SK-N-SH (cell line): ENCODE measurements at regions of chr14 and their contacts with region 1.

Region 1: DNA sequence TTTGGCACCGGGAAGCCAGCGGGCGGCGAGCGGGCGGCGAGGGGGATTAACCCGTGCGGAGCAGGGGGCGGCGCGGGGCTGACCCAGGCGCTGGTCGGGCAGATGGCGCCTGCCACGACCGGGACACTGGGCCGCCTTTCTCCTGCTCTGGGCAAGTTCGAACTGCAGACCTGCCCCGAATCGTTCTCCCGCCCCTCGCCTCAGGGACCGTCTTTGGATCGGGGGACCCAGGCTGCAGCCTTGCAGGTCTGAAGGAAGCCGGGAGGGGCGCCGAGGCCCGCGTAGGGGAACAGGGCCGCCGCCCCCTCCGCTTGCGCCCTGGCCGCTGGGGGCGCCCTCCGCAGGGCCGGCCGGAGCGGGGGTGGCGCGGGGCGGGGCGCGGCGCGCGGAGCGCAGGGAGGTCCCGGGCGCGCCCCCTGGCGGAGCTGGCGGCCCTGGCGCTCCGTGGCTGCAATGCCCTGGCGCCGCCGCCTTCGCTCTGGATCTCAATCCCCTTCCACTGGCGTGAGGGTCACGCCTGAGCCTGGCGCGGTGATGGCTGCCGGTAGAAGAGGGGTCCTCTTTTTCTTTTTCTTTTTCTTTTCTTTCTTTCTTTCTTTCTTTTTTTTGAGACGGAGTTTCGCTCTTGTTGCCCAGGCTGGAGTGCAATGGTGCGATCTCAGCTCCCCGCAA is 449 bp upstream of the LTBP2 start:
- DNase-seq: peak; percentile 95
- H3K4me3 ChIP-seq: peak overlapping the region; percentile 68 to 73
- H3K27ac ChIP-seq: peak overlapping the region; percentile 75 to 99
- H3K4me1 ChIP-seq: peaks cover 17 to 37% of the 10 kb centered on the region in 2 experiments; a peak in 3 of 4 replicates
- H3K27me3 ChIP-seq: no peaks in the 10 kb centered on the region
- CTCF ChIP-seq: peak; percentile 63
- EP300 ChIP-seq: peak in 1 of 2 experiments; percentile 38; a peak in 1 of 4 replicates
- RAD21 ChIP-seq: peak; percentile 54

Region 2: DNA sequence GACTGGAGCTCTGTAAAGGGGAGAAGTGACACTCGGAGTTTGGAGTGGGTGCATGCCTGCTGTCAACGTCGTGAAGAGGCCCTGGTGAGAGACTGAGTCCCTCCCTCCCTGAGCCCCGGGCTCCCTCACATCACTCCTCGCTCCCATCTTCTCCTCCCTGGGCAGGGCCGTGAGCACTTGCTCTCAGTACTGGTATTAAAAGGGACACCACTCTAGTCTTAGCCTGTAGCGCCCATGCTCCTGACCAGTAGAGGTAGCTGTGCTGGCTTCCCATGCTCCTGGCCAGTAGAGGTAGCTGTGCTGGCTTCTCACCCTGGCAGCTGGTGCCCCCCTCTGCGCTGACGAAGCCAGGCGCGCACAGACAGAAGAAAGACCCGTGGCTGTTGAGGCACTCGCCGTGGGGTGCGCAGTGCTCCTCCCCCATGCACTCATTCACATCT is 104.2 kb before region 1 on chr14:
- CTCF ChIA-PET with region 1: interaction called, 28 read pairs
- POLR2A ChIA-PET with region 1: interaction called, 3 read pairs
- DNase-seq: peak; percentile 77
- H3K4me3 ChIP-seq: no peak overlapping the region
- H3K27ac ChIP-seq: no peak overlapping the region
- H3K4me1 ChIP-seq: peaks cover 0 to 4% of the 10 kb centered on the region in 2 experiments; a peak in 1 of 4 replicates
- H3K27me3 ChIP-seq: no peaks in the 10 kb centered on the region
- CTCF ChIP-seq: peak; percentile 43
- EP300 ChIP-seq: no peak
- RAD21 ChIP-seq: peak; percentile 46

Region 3: GRCh38 chr14:74549588-74549987 is 62.9 kb before region 1 on chr14:
- CTCF ChIA-PET with region 1: interaction called, 40 read pairs
- POLR2A ChIA-PET with region 1: no interaction called
- DNase-seq: no peak
- H3K4me3 ChIP-seq: no peak overlapping the region
- H3K27ac ChIP-seq: no peak overlapping the region; a peak in 1 of 4 replicates
- H3K4me1 ChIP-seq: peaks cover 0 to 65% of the 10 kb centered on the region in 2 experiments; a peak in 2 of 4 replicates
- H3K27me3 ChIP-seq: no peaks in the 10 kb centered on the region
- CTCF ChIP-seq: 0 out of 2 replicates have a peak, but pooled peaks have one; percentile 16
- EP300 ChIP-seq: no peak
- RAD21 ChIP-seq: peak; percentile 62

Region 4: DNA sequence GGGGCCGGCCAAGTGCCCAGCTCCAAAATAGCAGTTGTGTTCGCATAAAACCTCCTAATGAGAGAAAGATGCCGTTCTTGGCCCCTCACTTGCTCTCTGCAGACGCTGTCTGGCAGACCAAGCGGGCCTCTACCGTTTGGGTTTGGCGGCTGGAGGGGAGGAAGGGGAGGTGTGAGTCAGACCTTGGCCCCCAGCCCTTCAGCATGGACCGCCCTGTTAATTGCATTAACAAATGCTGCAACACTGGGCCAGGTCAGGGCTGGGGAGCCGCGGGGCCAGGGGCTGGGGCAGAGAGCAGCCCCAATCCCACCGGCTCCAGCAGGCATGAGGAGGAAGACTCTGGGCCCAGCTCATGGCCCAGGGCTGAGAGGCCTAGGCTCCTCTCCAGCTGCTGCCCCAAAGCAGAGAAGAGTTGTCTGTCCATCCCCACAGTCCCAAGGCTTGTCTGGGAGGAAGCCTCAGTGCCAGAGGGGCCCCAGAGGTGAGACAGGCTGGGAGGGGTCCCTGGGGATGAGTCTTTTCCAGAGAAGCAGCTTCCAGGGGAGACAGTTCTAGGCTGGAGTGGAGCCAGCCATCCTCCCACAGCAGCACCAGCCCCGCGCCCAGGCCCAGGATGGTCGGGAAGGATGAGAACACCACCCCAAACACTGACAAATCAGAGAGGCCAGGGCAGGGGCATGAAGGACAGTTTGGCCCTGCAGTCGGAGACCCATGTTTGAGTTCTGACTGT is 17.3 kb before region 1 on chr14:
- CTCF ChIA-PET with region 1: interaction called, 45 read pairs
- POLR2A ChIA-PET with region 1: no interaction called
- DNase-seq: peak; percentile 70
- H3K4me3 ChIP-seq: peak overlapping the region in 1 of 2 experiments; percentile 17; a peak in 1 of 4 replicates
- H3K27ac ChIP-seq: peak overlapping the region; percentile 88 to 93
- H3K4me1 ChIP-seq: peaks cover 34 to 62% of the 10 kb centered on the region in 2 experiments; a peak in 2 of 4 replicates
- H3K27me3 ChIP-seq: no peaks in the 10 kb centered on the region
- CTCF ChIP-seq: no peak
- EP300 ChIP-seq: peak in 1 of 2 experiments; percentile 38; a peak in 1 of 4 replicates
- RAD21 ChIP-seq: no peak

Region 5: DNA sequence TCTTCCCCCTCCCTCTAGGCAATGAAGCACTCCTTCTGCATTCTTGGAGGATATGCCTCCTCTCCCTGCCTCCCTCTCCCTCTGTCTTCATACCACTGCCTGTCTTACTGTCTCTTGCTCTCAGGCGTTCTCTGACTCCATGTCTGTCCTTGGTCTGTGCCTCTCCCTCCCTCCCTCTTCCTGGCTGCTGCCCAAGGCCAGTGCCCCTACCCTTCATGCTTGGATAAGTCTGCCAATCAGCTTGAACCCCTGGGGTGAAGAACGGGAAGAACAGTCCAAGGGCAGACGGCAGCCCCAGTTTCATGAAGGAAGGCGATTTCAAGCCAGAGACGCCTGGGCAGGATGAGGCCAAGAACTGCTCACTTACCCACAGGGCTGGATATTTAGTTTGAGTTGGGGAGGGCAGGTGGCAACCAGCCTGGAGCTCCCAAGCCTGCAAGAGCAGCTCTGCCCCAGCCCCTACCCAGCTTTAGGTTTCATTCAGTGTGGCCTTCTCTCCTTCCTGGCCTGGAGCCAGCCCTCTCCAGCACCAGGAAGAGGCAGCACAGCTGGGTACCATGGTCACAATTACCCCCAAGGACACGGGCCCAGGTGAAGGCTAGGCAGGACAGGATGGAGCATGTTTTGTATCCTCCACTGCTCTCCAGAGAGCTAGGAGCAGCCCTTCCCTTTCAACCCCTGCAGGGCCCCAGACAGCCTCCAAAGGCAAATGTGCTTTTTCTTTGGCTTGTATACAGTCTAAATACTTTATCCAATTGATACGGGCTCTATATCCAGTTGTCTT is 35.4 kb after region 1 on chr14:
- CTCF ChIA-PET with region 1: interaction called, 17 read pairs
- POLR2A ChIA-PET with region 1: no interaction called
- DNase-seq: peak; percentile 47
- H3K4me3 ChIP-seq: no peak overlapping the region
- H3K27ac ChIP-seq: peak overlapping the region in 1 of 2 experiments; percentile 67; a peak in 2 of 4 replicates
- H3K4me1 ChIP-seq: peaks cover 21 to 29% of the 10 kb centered on the region in 2 experiments
- H3K27me3 ChIP-seq: no peaks in the 10 kb centered on the region
- CTCF ChIP-seq: no peak
- EP300 ChIP-seq: no peak
- RAD21 ChIP-seq: no peak

Region 6: GRCh38 chr14:74723134-74723533 is 110.6 kb after region 1 on chr14:
- CTCF ChIA-PET with region 1: no interaction called
- POLR2A ChIA-PET with region 1: no interaction called
- DNase-seq: no peak
- H3K4me3 ChIP-seq: no peak overlapping the region
- H3K27ac ChIP-seq: no peak overlapping the region
- H3K4me1 ChIP-seq: no peaks in the 10 kb centered on the region; a peak in 1 of 4 replicates
- H3K27me3 ChIP-seq: no peaks in the 10 kb centered on the region
- CTCF ChIP-seq: no peak
- EP300 ChIP-seq: no peak
- RAD21 ChIP-seq: no peak